ENCODE measurements at regions of chr3 and their contacts with region 1.

Region 1: GRCh38 chr3:189567766-189568420 is 63.3 kb upstream of the TP63 start:
- DNase-seq: no peak
- ATAC-seq: no peak
- H3K4me3 Mint-ChIP-seq: no peak overlapping the region
- H3K27ac Mint-ChIP-seq: peak overlapping the region; percentile 17
- H3K4me1 Mint-ChIP-seq: peaks cover 43% of the 10 kb centered on the region
- H3K27me3 Mint-ChIP-seq: no peaks in the 10 kb centered on the region
- CTCF ChIP-seq: no peak

Region 2: DNA sequence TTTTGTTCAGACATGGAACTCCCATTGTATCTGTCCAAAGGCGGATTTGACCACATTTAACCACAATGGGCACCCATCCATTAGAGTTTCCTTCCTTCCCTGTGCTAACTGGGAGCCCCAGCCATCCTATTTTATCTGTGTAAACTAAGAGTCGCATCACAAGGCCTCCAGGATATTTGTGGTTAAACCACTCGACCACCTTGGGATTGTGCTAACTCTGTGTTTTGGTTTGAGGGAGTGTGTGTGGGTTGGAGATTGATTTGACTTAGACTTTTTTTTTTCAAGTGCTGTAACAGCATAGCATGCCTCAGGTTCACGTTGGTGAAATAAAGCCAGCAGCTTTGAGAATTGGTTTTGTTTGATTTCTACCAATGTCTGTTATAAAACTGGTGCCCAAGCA is 37.1 kb before region 1 on chr3:
- CTCF ChIA-PET with region 1: no interaction called
- POLR2A ChIA-PET with region 1: no interaction called
- intact Hi-C with region 1: loop called (anchors 5 kb)
- DNase-seq: peak; percentile 22
- ATAC-seq: no peak
- H3K4me3 Mint-ChIP-seq: no peak overlapping the region
- H3K27ac Mint-ChIP-seq: peak overlapping the region; percentile 20
- H3K4me1 Mint-ChIP-seq: peaks cover 21% of the 10 kb centered on the region
- H3K27me3 Mint-ChIP-seq: no peaks in the 10 kb centered on the region
- CTCF ChIP-seq: no peak